ENCODE measurements at regions of chr2 and their contacts with region 1.

Region 1: DNA sequence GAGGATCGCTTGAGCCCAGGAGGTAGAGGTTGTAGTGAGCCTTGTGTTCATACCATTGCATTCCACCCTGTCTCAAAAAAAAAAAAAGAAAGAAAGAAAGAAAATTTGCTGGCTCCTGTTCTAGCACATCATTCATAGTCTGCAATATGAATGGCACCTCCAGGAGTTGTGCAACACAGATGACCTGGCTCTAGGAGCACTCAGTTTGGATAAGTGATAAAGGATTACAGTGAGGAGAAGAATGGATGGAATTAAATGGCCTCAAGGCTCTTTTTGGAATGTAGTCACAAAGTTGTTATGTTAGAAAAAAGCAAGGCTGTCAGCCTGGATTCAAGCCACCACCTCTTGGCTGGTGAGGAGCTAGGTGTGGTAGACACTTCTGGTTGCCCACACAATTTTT is 21.5 kb upstream of the SPRED2 start:
- DNase-seq: peak; percentile 52
- H3K4me3 Mint-ChIP-seq: no peak overlapping the region
- H3K27ac Mint-ChIP-seq: no peak overlapping the region
- H3K4me1 Mint-ChIP-seq: peaks cover 14% of the 10 kb centered on the region
- H3K27me3 Mint-ChIP-seq: no peaks in the 10 kb centered on the region
- CTCF ChIP-seq: no peak

Region 2: GRCh38 chr2:65554765-65555591 is 101.1 kb after region 1 on chr2:
- CTCF ChIA-PET with region 1: no interaction called
- POLR2A ChIA-PET with region 1: no interaction called
- intact Hi-C with region 1: loop called (anchors 5 kb)
- DNase-seq: no peak
- H3K4me3 Mint-ChIP-seq: no peak overlapping the region
- H3K27ac Mint-ChIP-seq: no peak overlapping the region
- H3K4me1 Mint-ChIP-seq: peaks cover 22% of the 10 kb centered on the region
- H3K27me3 Mint-ChIP-seq: no peaks in the 10 kb centered on the region
- CTCF ChIP-seq: no peak